ENCODE measurements at regions of chr4 and their contacts with region 1.

Region 1: DNA sequence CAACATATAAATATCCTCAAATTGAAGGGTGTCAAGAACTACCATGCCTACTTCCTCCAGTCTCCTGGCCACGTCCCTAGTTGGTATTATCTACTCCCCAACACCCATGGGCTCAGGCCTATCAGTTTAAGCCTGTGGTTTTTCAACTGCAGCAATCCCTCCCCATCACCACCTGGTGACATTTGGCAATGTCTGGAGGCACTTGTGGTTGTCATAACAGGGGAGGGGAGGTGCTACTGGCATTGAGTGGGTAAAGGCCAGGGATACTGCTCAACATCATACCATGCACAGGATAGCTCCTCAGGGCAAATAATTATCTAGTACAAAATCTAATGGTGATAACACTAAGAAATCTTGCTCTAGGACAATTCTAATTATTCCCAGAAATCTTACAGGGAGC is 95.3 kb downstream of the COMMD8 start:
- DNase-seq: no peak
- ATAC-seq: no peak
- H3K4me3 ChIP-seq: no peak overlapping the region
- H3K27ac ChIP-seq: no peak overlapping the region
- H3K4me1 ChIP-seq: no peaks in the 10 kb centered on the region
- H3K27me3 ChIP-seq: no peaks in the 10 kb centered on the region
- CTCF ChIP-seq: no peak
- EP300 ChIP-seq: no peak
- POLR2A ChIP-seq: no peak
- RAD21 ChIP-seq: no peak

Region 2: GRCh38 chr4:45580334-45580733 is 1787.9 kb before region 1 on chr4:
- CTCF ChIA-PET with region 1: no interaction called
- POLR2A ChIA-PET with region 1: no interaction called
- RAD21 ChIA-PET with region 1: no interaction called
- SMC1A ChIA-PET with region 1: no interaction called
- in situ Hi-C with region 1: no loop called
- intact Hi-C with region 1: no loop called
- DNase-seq: no peak
- ATAC-seq: no peak
- H3K4me3 ChIP-seq: no peak overlapping the region
- H3K27ac ChIP-seq: no peak overlapping the region
- H3K4me1 ChIP-seq: no peaks in the 10 kb centered on the region
- H3K27me3 ChIP-seq: no peaks in the 10 kb centered on the region
- CTCF ChIP-seq: no peak
- EP300 ChIP-seq: no peak
- POLR2A ChIP-seq: no peak
- RAD21 ChIP-seq: no peak

Region 3: GRCh38 chr4:47326032-47326431 is 42.2 kb before region 1 on chr4:
- CTCF ChIA-PET with region 1: no interaction called
- POLR2A ChIA-PET with region 1: no interaction called
- RAD21 ChIA-PET with region 1: no interaction called
- SMC1A ChIA-PET with region 1: no interaction called
- in situ Hi-C with region 1: no loop called
- intact Hi-C with region 1: loop called (anchors 1 kb)
- DNase-seq: no peak
- ATAC-seq: no peak
- H3K4me3 ChIP-seq: no peak overlapping the region
- H3K27ac ChIP-seq: no peak overlapping the region
- H3K4me1 ChIP-seq: no peaks in the 10 kb centered on the region
- H3K27me3 ChIP-seq: no peaks in the 10 kb centered on the region
- CTCF ChIP-seq: no peak
- EP300 ChIP-seq: no peak
- POLR2A ChIP-seq: no peak
- RAD21 ChIP-seq: no peak

Measured in GM12878 (cell line).